Posterior cingulate gyrus (tissue), 11 donors: ENCODE measurements at regions of chr20 and their contacts with region 1.

Region 1: DNA sequence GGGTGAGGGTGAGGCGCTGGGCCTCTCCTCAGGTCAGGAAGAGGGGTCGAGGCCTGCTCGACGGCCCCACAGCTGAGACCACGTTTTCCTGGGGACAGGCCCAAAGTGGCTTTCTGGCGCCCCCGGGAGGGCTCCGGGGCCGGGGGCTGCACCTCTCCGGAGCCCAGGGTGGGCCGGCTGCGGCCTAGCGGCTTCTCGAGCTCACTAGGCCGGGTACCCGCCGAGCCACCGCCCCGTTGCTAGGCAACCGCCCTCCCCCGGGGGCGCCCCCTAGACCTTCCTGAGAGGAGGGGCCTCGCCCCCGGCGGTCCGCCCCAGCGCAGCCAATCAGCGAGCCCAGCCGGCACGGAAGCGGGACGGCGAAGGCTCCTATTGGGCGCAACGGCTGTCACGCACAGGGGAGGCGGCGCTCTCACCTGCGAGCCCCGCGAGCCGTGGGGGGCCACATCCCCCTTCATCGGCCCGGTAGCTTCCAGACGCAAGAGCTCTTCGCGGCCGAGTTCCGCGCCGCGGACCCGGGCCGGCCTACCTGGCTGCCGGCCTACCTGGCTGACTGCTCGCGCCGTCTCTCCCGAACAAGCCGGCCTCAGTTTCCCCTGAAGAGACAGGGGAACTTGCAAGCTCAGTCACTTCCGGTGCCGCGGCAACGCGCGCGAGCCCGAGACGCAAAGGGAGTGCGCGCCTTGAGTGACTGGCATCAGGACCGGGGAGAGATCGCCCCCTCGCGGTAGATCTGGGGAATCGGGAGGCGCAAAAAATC is 831 bp upstream of the BCL2L1 start:
- DNase-seq: peak; percentile 97 to 100 (median 99)

Region 2: DNA sequence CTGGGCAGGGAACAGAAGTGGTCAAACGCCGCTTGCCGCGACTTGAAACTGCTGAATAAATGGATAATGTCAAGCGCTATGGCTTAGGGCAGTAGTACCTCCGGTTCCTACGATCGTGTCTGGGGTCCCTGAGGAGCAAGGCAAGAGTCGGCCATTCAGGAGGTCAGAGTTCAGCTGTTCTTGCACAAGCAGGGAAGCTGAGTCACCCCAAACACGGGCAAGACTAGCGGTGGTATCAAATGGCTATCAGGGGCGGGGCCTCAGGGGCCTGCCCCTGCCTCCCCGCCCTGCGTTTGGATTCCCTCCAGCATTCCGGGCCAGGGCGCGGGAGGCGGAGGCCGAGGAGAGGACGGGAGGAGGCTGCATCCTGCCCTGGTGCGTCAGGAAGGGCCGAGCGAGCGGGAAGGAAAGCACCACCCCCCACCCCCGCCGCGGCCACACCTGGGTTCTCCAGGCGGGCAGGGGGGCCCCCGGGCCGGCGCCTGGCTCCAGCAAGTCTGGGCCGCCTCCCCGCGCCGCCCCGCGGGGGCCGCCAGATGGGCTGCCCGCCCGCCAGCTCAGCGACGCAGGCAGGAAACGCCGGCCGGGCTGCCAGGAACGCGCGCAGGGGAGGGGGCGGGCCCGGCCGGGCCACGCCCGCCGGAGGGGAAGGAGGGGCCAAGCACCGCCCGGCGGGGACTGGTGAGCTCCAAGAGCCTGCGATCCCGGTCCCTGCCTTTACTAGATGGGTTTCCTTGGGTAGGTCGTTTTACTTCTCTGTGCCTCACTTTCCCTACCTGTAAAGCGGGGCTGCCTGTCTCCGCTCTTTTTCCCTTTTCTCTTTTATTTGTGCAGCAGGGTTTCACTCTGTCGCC is 150.6 kb before region 1 on chr20:
- intact Hi-C with region 1: loop called (anchors 5 kb)
- DNase-seq: peak; percentile 70 to 98 (median 84)

Region 3: GRCh38 chr20:31630187-31630790 is 93.2 kb before region 1 on chr20:
- intact Hi-C with region 1: loop called (anchors 1 kb)
- DNase-seq: peak in 2 of 10 donors; percentile 14 to 29

Region 4: GRCh38 chr20:31661625-31662371 is 61.7 kb before region 1 on chr20:
- intact Hi-C with region 1: loop called (anchors 1 kb)
- DNase-seq: peak; percentile 63 to 96 (median 84)

Region 5: GRCh38 chr20:31670371-31671228 is 52.9 kb before region 1 on chr20:
- intact Hi-C with region 1: loop called (anchors 2 kb)
- DNase-seq: peak; percentile 73 to 97 (median 81)

Region 6: DNA sequence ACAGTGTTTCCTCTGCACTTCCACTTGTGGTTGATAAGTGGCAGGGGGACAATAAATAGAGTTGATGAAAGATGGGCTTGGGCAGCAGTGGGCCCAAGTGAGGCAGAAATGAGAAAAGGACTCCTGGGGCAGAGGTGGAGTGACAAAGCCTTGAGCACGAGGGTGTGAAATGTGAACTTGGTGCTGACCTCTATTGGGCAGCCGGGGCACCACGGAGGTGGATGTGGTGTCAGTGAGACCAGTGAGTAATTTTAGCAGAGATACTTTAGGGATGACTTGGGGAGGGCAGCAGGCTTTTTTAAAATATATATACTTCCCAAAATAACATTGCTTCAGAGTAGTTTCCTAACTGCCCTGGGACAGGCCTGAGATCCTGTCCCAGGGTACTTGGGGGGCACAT is 65.1 kb after region 1 on chr20:
- intact Hi-C with region 1: no loop called
- DNase-seq: no peak

Region 7: DNA sequence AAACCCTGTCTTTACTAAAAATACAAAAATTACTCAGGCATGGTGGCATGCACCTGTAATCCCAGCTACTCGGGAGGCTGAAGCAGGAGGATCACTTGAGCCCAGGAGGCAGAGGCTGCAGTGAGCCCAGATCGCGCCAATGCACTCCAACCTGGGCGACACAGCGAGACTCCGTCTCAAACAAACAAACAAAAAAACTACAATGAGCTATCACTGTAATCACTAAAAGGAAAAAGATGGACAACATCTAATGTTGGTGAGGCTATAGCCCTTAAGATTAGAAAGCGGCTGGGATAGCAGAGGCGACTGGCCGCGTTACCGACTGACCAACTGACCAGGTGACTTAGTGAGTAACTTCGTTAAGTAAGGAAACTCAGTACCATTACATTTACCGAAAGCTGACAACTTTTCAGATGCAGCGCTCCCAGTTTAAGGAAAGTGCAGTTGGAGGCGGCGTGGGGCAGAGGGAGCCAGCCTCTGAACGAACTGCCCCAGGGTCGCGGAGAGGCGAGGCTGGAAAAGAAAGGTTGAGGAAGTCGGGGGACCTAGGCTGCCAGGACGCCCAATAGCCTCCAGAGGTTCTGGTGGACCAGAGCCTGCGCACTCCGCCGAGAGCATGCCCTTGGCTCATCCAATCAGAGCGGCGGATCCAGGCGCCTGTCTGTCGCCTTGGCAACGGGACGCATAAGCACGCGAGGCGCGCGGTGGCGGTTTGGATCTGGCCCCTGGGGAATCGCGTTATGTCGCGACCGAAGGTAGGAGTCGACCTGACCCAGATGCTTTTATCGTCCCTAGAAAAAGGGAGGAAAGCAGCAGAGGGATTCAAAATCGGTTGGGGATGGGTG is 155.9 kb after region 1 on chr20:
- intact Hi-C with region 1: no loop called
- DNase-seq: peak; percentile 87 to 99 (median 94)

Region 8: GRCh38 chr20:31908016-31908415 is 184.5 kb after region 1 on chr20:
- intact Hi-C with region 1: no loop called
- DNase-seq: no peak